T-cell (primary cell): ENCODE measurements at regions of chr15 and their contacts with region 1.

Region 1: DNA sequence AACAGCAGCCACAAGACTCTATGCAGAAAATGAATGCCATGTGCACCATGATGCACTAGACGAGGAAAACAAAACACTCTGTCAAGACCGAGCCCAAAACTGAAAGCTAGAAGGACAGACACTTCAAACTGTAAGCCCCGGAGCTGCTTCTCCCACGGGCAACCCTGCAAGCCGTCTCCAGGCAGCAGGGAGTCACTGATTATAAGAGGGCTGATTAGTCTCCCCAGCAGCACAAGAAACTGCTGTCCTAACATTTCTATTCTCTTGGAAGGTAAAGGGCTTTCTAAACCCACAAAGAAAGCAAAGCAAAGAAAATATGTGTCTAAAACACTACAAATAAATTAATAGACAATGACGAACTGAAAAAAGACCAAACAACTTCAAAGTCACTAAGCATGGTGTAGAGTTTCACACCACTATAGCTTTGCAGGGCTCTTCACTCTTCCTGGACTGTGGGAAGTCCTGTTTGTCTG is 15.5 kb downstream of the TBC1D2B start:
- DNase-seq: peak in 18 of 35 experiments; percentile 24 to 66 (median 35)
- ATAC-seq: peak; percentile 74 to 88 (median 76)
- H3K4me3 ChIP-seq: peak overlapping the region; percentile 11 to 34
- H3K4me3 Mint-ChIP-seq: peak overlapping the region; percentile 75 to 76 (median 76)
- H3K27ac ChIP-seq: peak overlapping the region; percentile 82
- H3K27ac Mint-ChIP-seq: peak overlapping the region; percentile 94 to 97
- H3K4me1 ChIP-seq: peaks cover 70 to 80% of the 10 kb centered on the region in 2 experiments
- H3K4me1 Mint-ChIP-seq: peaks cover 37 to 46% (median 46%) of the 10 kb centered on the region in 3 donors
- H3K27me3 ChIP-seq: no peaks in the 10 kb centered on the region
- H3K27me3 Mint-ChIP-seq: no peaks in the 10 kb centered on the region

Region 2: DNA sequence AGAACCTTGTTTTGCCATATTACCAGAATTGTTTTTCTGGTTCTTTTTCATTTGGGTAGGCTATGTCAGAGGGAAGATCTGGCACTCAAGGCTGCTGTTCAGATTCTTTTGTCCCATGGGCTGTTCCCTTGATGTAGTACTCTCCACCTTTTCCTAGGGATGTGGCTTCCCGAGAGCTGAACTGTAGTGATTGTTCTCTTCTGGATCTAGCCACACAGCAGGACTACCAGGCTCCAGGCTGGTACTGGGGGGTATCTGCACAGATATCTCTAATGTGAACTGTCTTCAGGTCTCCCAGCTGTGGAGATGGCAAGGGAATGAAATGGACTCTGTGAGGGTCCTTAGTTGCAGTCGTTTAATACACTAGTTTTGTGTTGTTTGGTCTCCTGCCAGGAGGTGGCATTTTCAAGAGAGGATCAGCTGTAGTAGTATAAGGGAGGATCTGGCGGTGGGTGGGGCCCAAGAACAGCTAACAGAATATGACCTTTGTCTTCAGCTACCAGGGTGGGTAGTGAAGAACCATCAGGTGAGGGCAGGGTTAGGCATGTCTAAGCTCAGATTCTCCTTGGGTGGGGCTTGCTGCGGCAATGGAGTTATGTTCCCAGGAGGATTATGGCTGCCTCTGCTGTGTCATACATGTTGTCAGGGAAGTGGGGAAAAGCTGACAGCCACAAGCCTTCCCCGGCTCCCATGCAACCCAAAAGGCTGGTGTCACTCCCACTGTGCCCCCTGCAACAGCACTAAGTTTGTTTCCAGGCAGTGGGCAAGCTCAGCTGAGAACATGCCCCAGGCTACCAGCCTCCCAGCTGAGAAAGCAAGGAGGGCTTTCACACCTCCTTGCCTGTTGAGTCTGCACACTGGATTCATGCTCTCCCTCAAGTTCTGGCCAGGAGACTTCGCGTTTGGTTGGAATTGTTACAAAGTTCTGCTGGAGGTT is 1472.9 kb before region 1 on chr15:
- CTCF ChIA-PET with region 1: no interaction called
- POLR2A ChIA-PET with region 1: no interaction called
- DNase-seq: no peak
- ATAC-seq: no peak
- H3K4me3 ChIP-seq: no peak overlapping the region
- H3K4me3 Mint-ChIP-seq: no peak overlapping the region
- H3K27ac ChIP-seq: no peak overlapping the region
- H3K27ac Mint-ChIP-seq: no peak overlapping the region
- H3K4me1 ChIP-seq: no peaks in the 10 kb centered on the region
- H3K4me1 Mint-ChIP-seq: peaks cover 0 to 8% (median 0%) of the 10 kb centered on the region in 3 donors
- H3K27me3 ChIP-seq: no peaks in the 10 kb centered on the region
- H3K27me3 Mint-ChIP-seq: no peaks in the 10 kb centered on the region

Region 3: DNA sequence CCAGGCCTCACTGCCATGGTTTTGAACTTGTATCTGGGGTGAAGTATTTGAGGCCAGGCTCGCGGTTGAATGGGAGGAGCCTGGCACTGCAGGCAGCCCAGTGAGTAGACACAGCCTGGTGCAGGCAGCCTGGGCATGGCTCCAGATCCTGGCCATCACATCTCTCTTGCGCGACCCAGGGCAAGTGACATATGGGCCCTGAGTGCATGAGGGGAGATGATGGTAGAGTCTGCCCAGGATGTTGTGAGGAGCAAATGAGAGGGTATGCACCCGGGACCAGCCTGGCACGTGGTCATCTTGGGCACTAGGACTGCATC is 87.9 kb before region 1 on chr15:
- CTCF ChIA-PET with region 1: no interaction called
- POLR2A ChIA-PET with region 1: no interaction called
- DNase-seq: no peak
- ATAC-seq: no peak
- H3K4me3 ChIP-seq: no peak overlapping the region
- H3K4me3 Mint-ChIP-seq: no peak overlapping the region
- H3K27ac ChIP-seq: no peak overlapping the region
- H3K27ac Mint-ChIP-seq: no peak overlapping the region
- H3K4me1 ChIP-seq: no peaks in the 10 kb centered on the region
- H3K4me1 Mint-ChIP-seq: no peaks in the 10 kb centered on the region
- H3K27me3 ChIP-seq: no peaks in the 10 kb centered on the region
- H3K27me3 Mint-ChIP-seq: no peaks in the 10 kb centered on the region

Region 4: GRCh38 chr15:78034495-78035191 is 27.4 kb before region 1 on chr15:
- CTCF ChIA-PET with region 1: interaction called in 1 of 2 experiments, 24 read pairs
- POLR2A ChIA-PET with region 1: interaction called in 1 of 2 experiments, 4 read pairs
- DNase-seq: peak; percentile 50 to 86 (median 78)
- ATAC-seq: peak; percentile 90 to 95 (median 92)
- H3K4me3 ChIP-seq: peak overlapping the region in 1 of 2 donors; percentile 8
- H3K4me3 Mint-ChIP-seq: peak overlapping the region; percentile 62 to 71 (median 66)
- H3K27ac ChIP-seq: peak overlapping the region; percentile 87
- H3K27ac Mint-ChIP-seq: peak overlapping the region; percentile 90 to 95
- H3K4me1 ChIP-seq: peaks cover 42 to 67% of the 10 kb centered on the region in 2 experiments
- H3K4me1 Mint-ChIP-seq: peaks cover 78 to 88% (median 84%) of the 10 kb centered on the region in 3 donors
- H3K27me3 ChIP-seq: no peaks in the 10 kb centered on the region
- H3K27me3 Mint-ChIP-seq: no peaks in the 10 kb centered on the region